Heart left ventricle (tissue), 16 donors: ENCODE measurements at regions of chr4 and their contacts with region 1.

Region 1: GRCh38 chr4:52712172-52712990 is 38.8 kb downstream of the ERVMER34-1 start:
- DNase-seq: peak; percentile 99
- ATAC-seq: peak; percentile 97 to 100 (median 99)
- H3K4me3 ChIP-seq: peak overlapping the region; percentile 51 to 96 (median 74)
- H3K27ac ChIP-seq: peak overlapping the region; percentile 86 to 98 (median 93)
- H3K4me1 ChIP-seq: peaks cover 6 to 32% (median 24%) of the 10 kb centered on the region in 12 donors
- H3K27me3 ChIP-seq: no peaks in the 10 kb centered on the region
- CTCF ChIP-seq: no peak
- POLR2A ChIP-seq: peak; percentile 77 to 95

Region 2: GRCh38 chr4:52588097-52588782 is 124.1 kb before region 1 on chr4:
- intact Hi-C with region 1: loop called in 1 of 10 experiments (anchors 10 kb)
- DNase-seq: peak in 2 of 5 donors; percentile 40 to 48
- ATAC-seq: peak in 3 of 4 donors; percentile 50 to 52 (median 52)
- H3K4me3 ChIP-seq: no peak overlapping the region
- H3K27ac ChIP-seq: peak overlapping the region in 10 of 12 donors; percentile 33 to 93 (median 60)
- H3K4me1 ChIP-seq: peaks cover 0 to 47% (median 19%) of the 10 kb centered on the region in 12 donors
- H3K27me3 ChIP-seq: no peaks in the 10 kb centered on the region
- CTCF ChIP-seq: peak; percentile 33 to 63 (median 54)
- POLR2A ChIP-seq: no peak

Region 3: GRCh38 chr4:52659001-52659721 is 53.2 kb before region 1 on chr4 and contains the start of gene USP46:
- intact Hi-C with region 1: loop called in 9 of 10 experiments (anchors 2 to 10 kb)
- DNase-seq: peak; percentile 84 to 90 (median 87)
- ATAC-seq: peak; percentile 60 to 96 (median 89)
- H3K4me3 ChIP-seq: peak within 1 kb of the TSS; percentile 60 to 98 (median 91)
- H3K27ac ChIP-seq: peak within 1 kb of the TSS; percentile 94 to 100 (median 98)
- H3K4me1 ChIP-seq: peaks cover 0 to 67% (median 40%) of the 10 kb centered on the region in 12 donors
- H3K27me3 ChIP-seq: no peaks in the 10 kb centered on the region
- CTCF ChIP-seq: no peak
- POLR2A ChIP-seq: peak in 1 of 2 donors; percentile 46
- total RNA-seq, gene USP46: 29.8 to 111 (median 75.3) TPM

Region 4: GRCh38 chr4:52837726-52838558 is 125.6 kb after region 1 on chr4:
- intact Hi-C with region 1: loop called in 1 of 10 experiments (anchors 5 kb)
- DNase-seq: peak in 1 of 5 donors; percentile 22
- ATAC-seq: peak in 3 of 4 donors; percentile 40 to 74 (median 51)
- H3K4me3 ChIP-seq: no peak overlapping the region
- H3K27ac ChIP-seq: peak overlapping the region in 5 of 12 donors; percentile 9 to 70 (median 44)
- H3K4me1 ChIP-seq: peaks cover 0 to 61% (median 45%) of the 10 kb centered on the region in 12 donors
- H3K27me3 ChIP-seq: no peaks in the 10 kb centered on the region
- CTCF ChIP-seq: no peak
- POLR2A ChIP-seq: no peak

Region 5: DNA sequence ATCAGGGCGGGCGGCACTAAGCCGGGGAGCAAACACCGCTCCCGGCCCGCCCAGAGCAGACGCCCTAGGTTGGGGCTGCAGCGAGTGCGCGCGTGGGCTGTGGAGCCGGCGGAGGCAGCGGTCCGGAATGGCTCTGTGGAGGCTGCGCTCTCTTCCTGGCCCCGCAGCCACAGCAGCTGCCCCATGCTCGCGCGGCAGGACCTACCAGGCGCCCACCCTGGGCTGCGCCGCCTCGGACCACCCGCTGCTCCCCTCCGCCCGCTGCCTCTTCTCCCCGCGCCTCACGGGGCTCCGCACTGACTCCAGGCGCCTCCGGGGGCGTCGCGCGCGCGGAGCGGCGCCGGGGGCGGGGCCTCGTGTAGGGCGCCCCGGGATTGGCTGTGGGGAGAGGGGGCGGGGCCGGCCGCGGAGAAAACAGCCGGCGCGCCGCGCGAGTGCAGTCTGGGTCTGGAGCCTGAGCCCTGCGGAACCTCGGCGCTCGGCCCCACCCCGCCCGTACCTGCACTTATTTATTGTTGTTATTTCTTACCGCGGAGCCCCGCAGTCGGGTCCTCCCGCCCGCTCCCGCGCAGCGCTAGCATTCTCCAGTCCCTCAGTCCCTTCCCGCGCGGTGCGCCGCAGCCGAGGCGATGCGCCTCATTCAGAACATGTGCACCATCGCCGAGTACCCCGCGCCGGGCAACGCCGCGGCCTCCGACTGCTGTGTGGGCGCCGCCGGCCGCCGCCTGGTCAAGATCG is 149.7 kb after region 1 on chr4 and contains the start of gene RASL11B:
- intact Hi-C with region 1: loop called in 5 of 10 experiments (anchors 2 to 10 kb)
- DNase-seq: peak; percentile 86 to 92 (median 91)
- ATAC-seq: peak; percentile 92 to 98 (median 98)
- H3K4me3 ChIP-seq: peak within 1 kb of the TSS; percentile 64 to 91 (median 74)
- H3K27ac ChIP-seq: peak within 1 kb of the TSS; percentile 17 to 90 (median 74)
- H3K4me1 ChIP-seq: peaks cover 0 to 48% (median 27%) of the 10 kb centered on the region in 12 donors
- H3K27me3 ChIP-seq: peaks cover 0 to 15% (median 0%) of the 10 kb centered on the region in 9 donors
- CTCF ChIP-seq: peak in 7 of 12 donors; percentile 33 to 52 (median 40)
- POLR2A ChIP-seq: peak; percentile 52 to 96
- total RNA-seq, gene RASL11B: 2.7 to 16.1 (median 5.5) TPM

Region 6: GRCh38 chr4:52869196-52869595 is 156.8 kb after region 1 on chr4:
- intact Hi-C with region 1: loop called in 5 of 10 experiments (anchors 5 to 10 kb)
- DNase-seq: peak; percentile 74 to 86 (median 81)
- ATAC-seq: peak; percentile 34 to 69 (median 55)
- H3K4me3 ChIP-seq: peak overlapping the region in 1 of 12 donors; percentile 6
- H3K27ac ChIP-seq: peak overlapping the region in 10 of 12 donors; percentile 34 to 81 (median 58)
- H3K4me1 ChIP-seq: peaks cover 0 to 76% (median 47%) of the 10 kb centered on the region in 12 donors
- H3K27me3 ChIP-seq: no peaks in the 10 kb centered on the region
- CTCF ChIP-seq: no peak
- POLR2A ChIP-seq: no peak

Region 7: GRCh38 chr4:52957220-52957686 is 244.9 kb after region 1 on chr4:
- intact Hi-C with region 1: loop called in 2 of 10 experiments (anchors 5 to 10 kb)
- DNase-seq: peak in 4 of 5 donors; percentile 26 to 44 (median 36)
- ATAC-seq: peak; percentile 73 to 80 (median 76)
- H3K4me3 ChIP-seq: no peak overlapping the region
- H3K27ac ChIP-seq: peak overlapping the region in 10 of 12 donors; percentile 18 to 70 (median 50)
- H3K4me1 ChIP-seq: peaks cover 0 to 33% (median 11%) of the 10 kb centered on the region in 12 donors
- H3K27me3 ChIP-seq: no peaks in the 10 kb centered on the region
- CTCF ChIP-seq: no peak
- POLR2A ChIP-seq: no peak